Activated T-helper 2 cell treated with anti-CD3 and anti-CD28 coated beads, Interferon-gamma antibody, Interleukin-2, Interleukin-4, amounts not matched to agents 10 μg/mL and 5 μg/mL and 100 μg/mL, durations not matched to agents 14 hours and 24 hours and 36 hours (primary cell): ENCODE measurements at regions of chr12 and their contacts with region 1.

Region 1: DNA sequence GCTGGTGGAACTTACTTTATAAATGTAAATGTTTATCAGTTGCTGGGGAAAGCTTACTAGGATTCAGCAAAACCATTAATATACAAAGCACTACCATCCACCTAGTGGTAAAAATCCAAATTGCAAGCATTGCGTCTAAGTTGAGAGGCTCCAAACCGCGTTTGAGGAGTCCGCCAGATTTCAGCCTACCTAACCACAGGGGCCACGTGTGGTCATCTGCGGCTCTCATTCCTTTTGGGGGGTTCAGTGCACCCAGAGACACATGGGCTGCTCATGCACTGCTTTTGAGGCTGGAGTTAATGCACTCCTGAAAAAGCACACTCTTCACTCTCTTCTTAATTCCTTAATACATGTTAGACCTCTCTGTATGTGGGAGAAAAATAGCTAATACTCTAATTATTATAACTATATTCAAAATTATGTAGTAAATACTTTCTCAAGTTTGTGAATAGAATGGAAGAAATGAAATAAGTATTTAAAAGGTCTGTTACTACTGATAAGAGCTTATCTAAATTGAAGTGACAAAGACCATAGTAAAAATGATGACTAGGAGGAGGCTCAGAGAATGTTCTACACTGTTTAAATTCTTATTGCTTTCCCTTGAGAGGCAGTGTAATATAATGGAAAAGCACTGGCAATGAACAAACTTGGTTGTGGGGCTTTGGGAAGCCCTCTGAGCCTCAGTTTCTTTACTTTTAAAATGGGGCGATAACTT is 41.4 kb upstream of the MANSC4 start:
- DNase-seq: no peak
- H3K4me3 Mint-ChIP-seq: no peak overlapping the region
- H3K27ac Mint-ChIP-seq: no peak overlapping the region
- H3K4me1 Mint-ChIP-seq: peaks cover 44% of the 10 kb centered on the region
- H3K27me3 Mint-ChIP-seq: peaks cover 36% of the 10 kb centered on the region

Region 2: DNA sequence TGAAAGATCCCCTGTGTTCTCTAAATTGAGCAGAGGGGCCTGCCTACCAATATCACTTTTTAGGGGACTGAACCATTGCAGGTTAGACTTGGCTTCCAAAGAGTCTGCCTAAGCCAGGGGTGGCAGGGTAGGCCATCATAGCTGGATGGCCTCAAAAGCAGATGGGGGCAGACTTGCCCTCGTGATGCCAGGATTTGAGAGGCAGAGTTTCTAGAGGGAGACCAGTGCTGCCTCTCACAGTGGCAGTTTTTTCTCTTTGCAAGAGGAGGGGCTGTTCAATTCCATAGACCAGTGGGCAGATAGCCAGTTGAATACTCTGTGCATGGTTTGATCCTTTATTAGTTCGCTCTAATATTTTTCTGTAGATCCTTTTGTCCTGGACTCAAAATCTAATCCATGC is 398.7 kb before region 1 on chr12:
- intact Hi-C with region 1: no loop called
- DNase-seq: no peak
- H3K4me3 Mint-ChIP-seq: no peak overlapping the region
- H3K27ac Mint-ChIP-seq: no peak overlapping the region
- H3K4me1 Mint-ChIP-seq: peaks cover 3% of the 10 kb centered on the region
- H3K27me3 Mint-ChIP-seq: no peaks in the 10 kb centered on the region

Region 3: GRCh38 chr12:27462151-27462694 is 359.2 kb before region 1 on chr12:
- intact Hi-C with region 1: loop called (anchors 2 kb)
- DNase-seq: no peak
- H3K4me3 Mint-ChIP-seq: peak overlapping the region; percentile 1
- H3K27ac Mint-ChIP-seq: peak overlapping the region; percentile 72
- H3K4me1 Mint-ChIP-seq: peaks cover 53% of the 10 kb centered on the region
- H3K27me3 Mint-ChIP-seq: no peaks in the 10 kb centered on the region

Region 4: GRCh38 chr12:27619308-27619707 is 202.1 kb before region 1 on chr12:
- intact Hi-C with region 1: no loop called
- DNase-seq: no peak
- H3K4me3 Mint-ChIP-seq: no peak overlapping the region
- H3K27ac Mint-ChIP-seq: peak overlapping the region; percentile 3
- H3K4me1 Mint-ChIP-seq: peaks cover 29% of the 10 kb centered on the region
- H3K27me3 Mint-ChIP-seq: peaks cover 2% of the 10 kb centered on the region

Region 5: GRCh38 chr12:27710592-27711316 is 110.7 kb before region 1 on chr12 and contains the start of gene MRPS35:
- intact Hi-C with region 1: loop called (anchors 1 kb)
- DNase-seq: peak; percentile 90
- H3K4me3 Mint-ChIP-seq: peak within 1 kb of the TSS; percentile 95
- H3K27ac Mint-ChIP-seq: peak within 1 kb of the TSS; percentile 94
- H3K4me1 Mint-ChIP-seq: peaks cover 21% of the 10 kb centered on the region
- H3K27me3 Mint-ChIP-seq: peaks cover 7% of the 10 kb centered on the region
- total RNA-seq, gene MRPS35: 53.6 and 54.0 TPM in 2 replicates

Region 6: DNA sequence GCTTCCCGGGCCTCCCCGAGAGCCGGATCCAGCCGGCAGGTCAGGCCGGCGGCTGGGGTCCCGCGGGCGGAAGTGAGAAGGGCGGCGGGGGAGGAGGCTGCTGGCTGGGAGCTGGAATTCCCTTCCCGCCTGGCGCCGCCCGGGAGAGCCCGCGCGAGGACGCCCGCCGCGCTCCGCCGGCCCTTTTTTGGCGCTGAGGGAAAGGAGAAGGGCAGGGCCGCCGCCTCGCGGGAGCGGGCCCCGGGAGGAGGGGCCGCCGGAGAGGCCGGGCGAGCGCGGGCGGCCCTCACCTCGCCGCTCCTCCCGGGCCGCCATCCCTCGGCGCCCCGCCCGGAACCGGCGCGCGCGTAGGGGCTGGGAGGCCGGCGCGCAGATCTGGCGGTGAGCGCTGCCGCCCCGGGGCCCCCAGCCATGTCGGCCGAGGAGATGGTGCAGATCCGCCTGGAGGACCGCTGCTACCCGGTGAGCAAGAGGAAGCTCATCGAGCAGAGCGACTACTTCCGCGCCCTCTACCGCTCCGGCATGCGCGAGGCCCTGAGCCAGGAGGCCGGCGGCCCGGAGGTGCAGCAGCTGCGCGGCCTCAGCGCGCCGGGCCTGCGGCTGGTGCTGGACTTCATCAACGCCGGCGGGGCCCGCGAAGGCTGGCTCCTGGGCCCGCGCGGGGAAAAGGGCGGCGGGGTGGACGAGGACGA is 41.4 kb before region 1 on chr12 and contains the starts of genes KLHL42 and MANSC4:
- intact Hi-C with region 1: loop called (anchors 2 kb)
- DNase-seq: peak; percentile 65
- H3K4me3 Mint-ChIP-seq: peak within 1 kb of the TSS; percentile 80
- H3K27ac Mint-ChIP-seq: peak within 1 kb of the TSS; percentile 81
- H3K4me1 Mint-ChIP-seq: peaks cover 28% of the 10 kb centered on the region
- H3K27me3 Mint-ChIP-seq: peaks cover 18% of the 10 kb centered on the region
- total RNA-seq, gene KLHL42: 16.2 and 16.9 TPM in 2 replicates
- total RNA-seq, gene MANSC4: not detected in 2 replicates

Region 7: DNA sequence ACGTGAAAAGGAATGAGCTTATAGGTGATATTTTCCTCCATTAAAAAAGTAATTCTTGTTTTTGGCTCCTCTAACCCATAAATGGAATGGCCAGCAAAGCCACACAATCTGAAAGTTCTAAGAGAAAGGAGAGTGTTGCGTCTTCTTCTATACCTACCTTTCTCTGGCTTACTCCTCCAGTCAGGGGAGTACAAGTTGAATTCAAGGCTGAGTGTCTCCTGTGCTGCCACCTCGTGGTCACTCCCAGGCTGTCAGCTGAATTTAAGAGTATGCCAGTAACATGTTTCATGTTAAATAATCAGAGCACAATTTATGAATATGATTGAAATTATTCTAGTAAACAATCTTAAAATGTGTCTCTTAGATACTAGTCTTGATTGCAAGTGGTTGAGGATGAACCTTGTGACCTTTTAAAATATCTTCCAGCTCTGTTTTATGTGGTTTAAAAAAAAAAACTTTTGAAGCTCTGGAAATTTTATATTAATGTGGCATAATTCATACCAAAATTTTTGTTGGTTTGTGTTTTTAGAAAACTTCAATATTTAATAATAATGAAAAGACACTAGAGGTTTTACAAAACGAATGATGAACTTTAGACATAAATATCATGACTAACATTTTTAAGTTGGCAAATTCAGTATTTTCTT is 119.5 kb after region 1 on chr12:
- intact Hi-C with region 1: loop called (anchors 2 kb)
- DNase-seq: peak; percentile 42
- H3K4me3 Mint-ChIP-seq: no peak overlapping the region
- H3K27ac Mint-ChIP-seq: no peak overlapping the region
- H3K4me1 Mint-ChIP-seq: no peaks in the 10 kb centered on the region
- H3K27me3 Mint-ChIP-seq: peaks cover 15% of the 10 kb centered on the region

Region 8: DNA sequence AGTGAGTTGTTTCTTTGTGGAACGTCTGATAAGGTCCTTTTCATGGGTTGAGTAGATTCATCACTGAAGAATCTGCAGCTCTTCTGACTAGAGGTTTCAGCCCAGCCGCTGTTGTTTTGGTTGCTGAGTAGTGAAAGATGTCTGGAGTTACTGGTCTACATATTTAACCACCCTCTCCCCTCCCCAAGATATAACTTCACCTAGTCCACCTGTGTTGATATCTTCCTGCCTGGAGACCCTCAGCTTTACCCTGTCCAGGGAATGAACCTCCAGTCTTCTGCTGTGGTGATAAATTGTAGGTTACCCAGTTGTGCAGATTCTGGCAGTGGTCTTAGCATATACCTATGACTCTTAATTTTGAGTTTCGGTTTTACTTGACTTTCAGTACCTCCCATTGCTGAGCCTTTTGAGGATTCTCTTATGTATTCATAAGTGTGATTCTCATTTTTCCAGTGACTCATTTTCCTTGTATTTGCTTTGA is 431.8 kb after region 1 on chr12:
- intact Hi-C with region 1: loop called (anchors 1 kb)
- DNase-seq: peak; percentile 11
- H3K4me3 Mint-ChIP-seq: peak overlapping the region; percentile 59
- H3K27ac Mint-ChIP-seq: peak overlapping the region; percentile 92
- H3K4me1 Mint-ChIP-seq: peaks cover 41% of the 10 kb centered on the region
- H3K27me3 Mint-ChIP-seq: peaks cover 2% of the 10 kb centered on the region